SK-N-SH (cell line): ENCODE measurements at regions of chr1 and their contacts with region 1.

Region 1: GRCh38 chr1:63691701-63692425 is 82.0 kb upstream of the ROR1 start:
- DNase-seq: peak; percentile 70
- H3K4me3 ChIP-seq: no peak overlapping the region
- H3K27ac ChIP-seq: peak overlapping the region in 1 of 2 experiments; percentile 58; a peak in 2 of 4 replicates
- H3K4me1 ChIP-seq: no peaks in the 10 kb centered on the region; a peak in 1 of 4 replicates
- H3K27me3 ChIP-seq: no peaks in the 10 kb centered on the region; the same call in 1 of the 2 replicates
- CTCF ChIP-seq: peak; percentile 87
- EP300 ChIP-seq: no peak; a peak in 1 of 4 replicates
- RAD21 ChIP-seq: peak; percentile 95

Region 2: GRCh38 chr1:63615768-63616420 is 76.0 kb before region 1 on chr1:
- CTCF ChIA-PET with region 1: interaction called, 14 read pairs
- POLR2A ChIA-PET with region 1: no interaction called
- DNase-seq: peak; percentile 55
- H3K4me3 ChIP-seq: no peak overlapping the region
- H3K27ac ChIP-seq: no peak overlapping the region
- H3K4me1 ChIP-seq: peaks cover 0 to 5% of the 10 kb centered on the region in 2 experiments; a peak in 3 of 4 replicates
- H3K27me3 ChIP-seq: no peaks in the 10 kb centered on the region
- CTCF ChIP-seq: peak; percentile 77
- EP300 ChIP-seq: no peak
- RAD21 ChIP-seq: peak; percentile 90

Region 3: DNA sequence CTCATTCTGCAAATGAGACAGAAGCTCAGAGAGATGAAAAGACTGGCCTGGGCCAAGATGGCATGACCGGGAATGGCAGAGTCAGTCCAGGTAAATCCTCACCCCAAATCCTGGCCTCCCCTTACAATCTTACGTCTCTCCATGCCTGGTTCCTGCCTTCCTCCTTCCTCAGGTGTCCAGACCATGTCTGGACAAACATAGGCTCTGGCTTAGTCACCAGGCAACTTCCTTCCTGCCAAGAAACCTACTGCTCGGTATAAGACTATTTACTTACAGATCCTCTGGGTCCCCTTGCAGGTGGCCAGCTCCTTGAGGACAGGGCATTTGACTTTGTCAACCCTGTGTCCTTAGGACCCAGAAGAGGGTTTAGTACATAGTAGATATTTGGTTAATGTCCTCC is 12.6 kb after region 1 on chr1:
- CTCF ChIA-PET with region 1: interaction called, 13 read pairs
- POLR2A ChIA-PET with region 1: no interaction called
- DNase-seq: no peak
- H3K4me3 ChIP-seq: no peak overlapping the region
- H3K27ac ChIP-seq: no peak overlapping the region
- H3K4me1 ChIP-seq: peaks cover 0 to 13% of the 10 kb centered on the region in 2 experiments; a peak in 2 of 4 replicates
- H3K27me3 ChIP-seq: no peaks in the 10 kb centered on the region; the same call in 1 of the 2 replicates
- CTCF ChIP-seq: no peak
- EP300 ChIP-seq: no peak
- RAD21 ChIP-seq: no peak

Region 4: DNA sequence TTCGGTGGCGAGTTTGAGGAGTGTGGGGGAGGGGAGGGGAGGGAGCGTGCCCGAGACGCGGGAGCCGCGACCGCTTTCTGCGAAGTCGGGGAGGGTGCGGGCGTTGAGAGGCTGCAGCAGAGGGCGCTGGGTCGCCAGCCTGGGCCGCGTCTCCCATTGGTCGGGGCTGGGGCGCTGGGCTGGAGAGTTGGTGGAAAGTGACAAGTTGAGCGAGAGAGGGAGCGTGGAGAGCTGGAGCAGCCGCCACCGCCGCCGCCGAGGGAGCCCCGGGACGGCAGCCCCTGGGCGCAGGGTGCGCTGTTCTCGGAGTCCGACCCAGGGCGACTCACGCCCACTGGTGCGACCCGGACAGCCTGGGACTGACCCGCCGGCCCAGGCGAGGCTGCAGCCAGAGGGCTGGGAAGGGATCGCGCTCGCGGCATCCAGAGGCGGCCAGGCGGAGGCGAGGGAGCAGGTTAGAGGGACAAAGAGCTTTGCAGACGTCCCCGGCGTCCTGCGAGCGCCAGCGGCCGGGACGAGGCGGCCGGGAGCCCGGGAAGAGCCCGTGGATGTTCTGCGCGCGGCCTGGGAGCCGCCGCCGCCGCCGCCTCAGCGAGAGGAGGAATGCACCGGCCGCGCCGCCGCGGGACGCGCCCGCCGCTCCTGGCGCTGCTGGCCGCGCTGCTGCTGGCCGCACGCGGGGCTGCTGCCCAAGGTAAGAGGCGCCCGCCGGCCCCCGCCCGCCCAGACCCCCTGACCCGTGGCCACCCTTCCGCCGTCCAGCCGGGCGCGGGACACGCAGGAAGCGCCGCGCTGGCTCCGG is 82.2 kb after region 1 on chr1 and contains the start of gene ROR1:
- CTCF ChIA-PET with region 1: interaction called, 37 read pairs
- POLR2A ChIA-PET with region 1: no interaction called
- DNase-seq: peak; percentile 95
- H3K4me3 ChIP-seq: peak within 1 kb of the TSS; percentile 84 to 91
- H3K27ac ChIP-seq: peak within 1 kb of the TSS; percentile 15 to 85; a peak in 3 of 4 replicates
- H3K4me1 ChIP-seq: peaks cover 0 to 11% of the 10 kb centered on the region in 2 experiments; a peak in 3 of 4 replicates
- H3K27me3 ChIP-seq: no peaks in the 10 kb centered on the region
- CTCF ChIP-seq: peak; percentile 69
- EP300 ChIP-seq: no peak
- RAD21 ChIP-seq: peak; percentile 84
- polyA plus RNA-seq, gene ROR1: 4.0 and 5.5 TPM in 2 replicates

Region 5: DNA sequence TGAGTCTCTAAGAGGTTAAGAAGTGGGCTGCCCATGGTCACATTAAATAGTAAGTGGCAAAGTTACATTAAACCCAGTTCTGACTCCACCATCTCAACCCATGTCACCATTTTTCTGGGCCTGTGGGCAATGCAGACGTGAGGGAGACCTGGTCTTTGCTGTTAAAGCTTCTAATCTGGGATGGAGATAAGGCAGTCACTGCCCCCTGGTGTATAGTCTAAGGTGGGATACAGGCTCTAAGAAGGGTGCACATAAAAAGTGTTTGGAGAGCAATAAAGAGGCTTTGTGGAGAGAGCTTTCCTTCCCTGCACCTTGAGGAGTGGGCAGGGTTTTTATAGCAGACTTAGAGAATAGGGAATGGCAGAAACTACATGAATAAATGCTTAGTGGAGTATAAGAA is 223.3 kb after region 1 on chr1:
- CTCF ChIA-PET with region 1: interaction called, 22 read pairs
- POLR2A ChIA-PET with region 1: no interaction called
- DNase-seq: peak; percentile 32
- H3K4me3 ChIP-seq: no peak overlapping the region
- H3K27ac ChIP-seq: no peak overlapping the region
- H3K4me1 ChIP-seq: peaks cover 0 to 27% of the 10 kb centered on the region in 2 experiments; a peak in 3 of 4 replicates
- H3K27me3 ChIP-seq: no peaks in the 10 kb centered on the region
- CTCF ChIP-seq: peak; percentile 46
- EP300 ChIP-seq: no peak
- RAD21 ChIP-seq: peak; percentile 67

Region 6: GRCh38 chr1:63935143-63935542 is 243.3 kb after region 1 on chr1:
- CTCF ChIA-PET with region 1: interaction called, 10 read pairs
- POLR2A ChIA-PET with region 1: no interaction called
- DNase-seq: peak; percentile 15
- H3K4me3 ChIP-seq: no peak overlapping the region
- H3K27ac ChIP-seq: peak overlapping the region in 1 of 2 experiments; percentile 73; a peak in 2 of 4 replicates
- H3K4me1 ChIP-seq: peaks cover 0 to 4% of the 10 kb centered on the region in 2 experiments; a peak in 2 of 4 replicates
- H3K27me3 ChIP-seq: no peaks in the 10 kb centered on the region
- CTCF ChIP-seq: peak; percentile 52
- EP300 ChIP-seq: no peak
- RAD21 ChIP-seq: peak; percentile 65

Region 7: DNA sequence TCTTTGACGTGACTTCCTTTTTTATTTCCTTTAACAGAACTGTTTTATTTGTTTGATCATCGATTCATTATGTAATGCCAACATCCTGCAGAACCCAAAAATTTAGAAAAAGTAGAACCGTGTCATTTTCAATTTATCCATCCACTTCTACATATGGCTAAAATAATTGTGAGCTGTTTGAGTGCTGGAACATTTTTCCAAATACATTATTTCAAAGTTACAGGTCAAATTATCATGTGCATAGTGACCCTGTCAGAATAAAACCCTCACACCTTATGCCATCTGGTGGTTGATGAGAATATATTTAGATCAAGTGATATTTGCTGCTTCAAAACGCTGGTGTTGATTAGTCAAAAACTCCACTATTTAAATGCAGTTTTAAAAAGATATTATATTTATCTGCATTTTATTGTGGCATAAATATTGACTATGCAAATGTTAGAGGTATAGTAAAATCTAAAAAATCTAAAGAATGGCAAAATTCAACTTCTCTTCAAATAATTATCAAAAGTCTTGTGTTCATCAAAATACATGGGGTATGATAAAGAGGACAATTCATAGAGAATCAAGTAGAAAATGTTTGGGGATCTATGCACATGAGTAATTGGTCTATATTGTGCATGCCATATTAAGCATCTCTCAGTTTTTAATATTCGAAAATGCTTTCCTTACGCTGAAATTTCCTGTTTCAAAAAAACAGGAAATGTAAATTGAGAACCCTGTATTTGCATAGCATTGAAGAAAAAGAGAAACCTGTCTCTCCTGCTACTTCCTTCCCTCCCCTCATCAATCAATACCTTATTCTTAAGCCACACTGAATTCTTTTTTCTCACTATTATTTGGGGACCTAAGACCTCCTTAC is 551.3 kb after region 1 on chr1:
- CTCF ChIA-PET with region 1: interaction called, 34 read pairs
- POLR2A ChIA-PET with region 1: no interaction called
- DNase-seq: peak; percentile 41
- H3K4me3 ChIP-seq: 0 out of 4 replicates have a peak overlapping the region, but pooled peaks of 1 of the 2 experiments have one; percentile 1
- H3K27ac ChIP-seq: peak overlapping the region in 1 of 2 experiments; percentile 91; a peak in 2 of 4 replicates
- H3K4me1 ChIP-seq: peaks cover 10 to 22% of the 10 kb centered on the region in 2 experiments; a peak in 3 of 4 replicates
- H3K27me3 ChIP-seq: no peaks in the 10 kb centered on the region
- CTCF ChIP-seq: peak; percentile 72
- EP300 ChIP-seq: no peak
- RAD21 ChIP-seq: peak; percentile 93